CD8-positive, alpha-beta T cell (primary cell): ENCODE measurements at regions of chr3 and their contacts with region 1.

Region 1: DNA sequence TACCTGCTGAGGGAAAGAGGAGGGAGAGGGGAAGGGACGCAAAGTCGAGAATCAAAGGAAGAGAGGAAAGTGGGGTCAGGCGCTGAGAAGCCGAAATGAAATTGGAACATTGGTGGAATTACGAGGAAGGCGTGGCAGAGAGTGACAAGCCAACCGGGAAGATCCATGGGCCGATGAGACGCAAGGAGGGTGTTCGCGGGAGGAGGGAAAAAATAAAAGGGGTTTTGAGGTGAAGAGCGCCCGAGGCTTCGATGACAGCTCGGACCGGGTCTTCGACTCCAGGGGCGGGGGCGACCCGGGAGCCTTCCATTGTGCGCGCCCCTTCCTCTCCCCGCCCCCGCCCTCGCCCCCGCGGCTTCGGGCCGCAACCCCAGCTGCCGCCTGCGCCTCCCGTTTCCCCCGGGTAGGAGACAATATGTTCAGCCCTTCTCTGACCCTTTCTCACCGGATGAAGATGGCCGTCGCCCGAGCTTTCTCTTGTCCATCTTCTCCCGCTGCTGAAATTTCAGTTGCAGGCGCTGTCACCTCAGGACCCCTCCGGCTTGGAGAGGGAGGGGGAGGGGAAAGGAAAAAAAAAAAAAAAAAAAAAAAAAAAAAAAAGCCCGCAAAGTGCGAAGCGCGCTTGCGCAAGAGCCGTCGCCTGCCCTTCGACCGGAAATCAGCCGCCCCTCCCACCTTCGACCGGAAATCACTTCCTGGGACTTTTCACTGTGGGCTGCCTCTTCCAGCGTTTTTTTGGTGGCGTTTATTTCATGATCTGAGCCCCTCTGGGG is at the start of gene SENP7:
- DNase-seq: peak; percentile 38 to 91 (median 82)
- ATAC-seq: peak; percentile 63
- H3K4me3 ChIP-seq: peak within 1 kb of the TSS; percentile 67 to 80
- H3K4me3 Mint-ChIP-seq: peak within 1 kb of the TSS; percentile 100
- H3K27ac ChIP-seq: peak within 1 kb of the TSS; percentile 75 to 90
- H3K27ac Mint-ChIP-seq: peak within 1 kb of the TSS; percentile 99
- H3K4me1 ChIP-seq: peaks cover 29% of the 10 kb centered on the region
- H3K4me1 Mint-ChIP-seq: peaks cover 59% of the 10 kb centered on the region
- H3K27me3 ChIP-seq: no peaks in the 10 kb centered on the region
- H3K27me3 Mint-ChIP-seq: no peaks in the 10 kb centered on the region
- CTCF ChIP-seq: no peak
- total RNA-seq, gene SENP7: 28.3 to 29.1 TPM

Region 2: GRCh38 chr3:101381809-101382208 is 131.0 kb before region 1 on chr3:
- CTCF ChIA-PET with region 1: interaction called, 3 read pairs
- POLR2A ChIA-PET with region 1: no interaction called
- intact Hi-C with region 1: loop called in 1 of 2 experiments (anchors 5 kb)
- DNase-seq: peak in 2 of 9 experiments; percentile 46 to 61
- ATAC-seq: peak; percentile 44
- H3K4me3 ChIP-seq: no peak overlapping the region
- H3K4me3 Mint-ChIP-seq: no peak overlapping the region
- H3K27ac ChIP-seq: peak overlapping the region in 1 of 2 experiments; percentile 25
- H3K27ac Mint-ChIP-seq: peak overlapping the region; percentile 49
- H3K4me1 ChIP-seq: peaks cover 12% of the 10 kb centered on the region
- H3K4me1 Mint-ChIP-seq: peaks cover 57% of the 10 kb centered on the region
- H3K27me3 ChIP-seq: no peaks in the 10 kb centered on the region
- H3K27me3 Mint-ChIP-seq: no peaks in the 10 kb centered on the region
- CTCF ChIP-seq: peak; percentile 55

Region 3: DNA sequence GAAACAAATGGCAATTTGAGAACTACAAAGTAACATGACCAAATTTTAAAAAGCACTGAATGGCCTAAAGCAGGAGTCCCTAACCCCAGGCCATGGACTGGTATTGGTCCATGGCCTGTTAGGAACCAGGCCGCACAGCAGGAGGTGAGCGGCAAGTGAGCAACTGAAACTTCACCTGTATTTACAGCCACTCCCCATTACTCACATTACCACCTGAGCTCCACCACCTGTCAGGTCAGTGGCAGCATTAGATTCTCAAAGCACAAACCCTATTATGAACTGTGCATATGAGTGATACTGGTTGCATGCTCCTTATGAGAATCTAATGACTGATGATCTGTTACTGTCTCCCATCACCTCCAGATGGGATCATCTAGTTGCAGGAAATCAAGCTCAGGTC is 48.6 kb before region 1 on chr3:
- CTCF ChIA-PET with region 1: no interaction called
- POLR2A ChIA-PET with region 1: interaction called, 3 read pairs
- intact Hi-C with region 1: loop called in 1 of 2 experiments (anchors 5 kb)
- DNase-seq: no peak
- ATAC-seq: no peak
- H3K4me3 ChIP-seq: no peak overlapping the region
- H3K4me3 Mint-ChIP-seq: no peak overlapping the region
- H3K27ac ChIP-seq: peak overlapping the region in 1 of 2 experiments; percentile 31
- H3K27ac Mint-ChIP-seq: peak overlapping the region; percentile 75
- H3K4me1 ChIP-seq: peaks cover 27% of the 10 kb centered on the region
- H3K4me1 Mint-ChIP-seq: peaks cover 77% of the 10 kb centered on the region
- H3K27me3 ChIP-seq: no peaks in the 10 kb centered on the region
- H3K27me3 Mint-ChIP-seq: no peaks in the 10 kb centered on the region
- CTCF ChIP-seq: no peak

Region 4: DNA sequence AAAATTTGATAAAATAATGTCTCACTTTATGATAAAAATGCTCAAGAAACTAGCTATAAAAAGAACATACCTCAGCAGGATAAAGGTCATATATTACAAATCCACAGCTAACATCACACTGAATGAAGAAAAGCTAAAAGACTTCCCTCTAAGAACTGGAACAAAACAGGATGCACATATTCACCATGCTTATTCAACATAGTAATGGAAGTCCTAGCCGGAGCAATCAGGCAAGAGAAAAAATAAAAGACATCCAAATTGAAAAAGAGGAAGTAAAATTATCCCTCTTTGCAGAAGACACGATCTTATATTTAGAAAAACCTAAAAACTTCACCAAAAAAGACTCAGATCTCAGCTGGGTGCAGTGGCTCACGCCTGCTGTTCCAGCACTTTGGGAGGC is 33.9 kb before region 1 on chr3:
- CTCF ChIA-PET with region 1: no interaction called
- POLR2A ChIA-PET with region 1: no interaction called
- intact Hi-C with region 1: loop called in 1 of 2 experiments (anchors 5 kb)
- DNase-seq: no peak
- ATAC-seq: no peak
- H3K4me3 ChIP-seq: no peak overlapping the region
- H3K4me3 Mint-ChIP-seq: no peak overlapping the region
- H3K27ac ChIP-seq: no peak overlapping the region
- H3K27ac Mint-ChIP-seq: peak overlapping the region; percentile 47
- H3K4me1 ChIP-seq: peaks cover 9% of the 10 kb centered on the region
- H3K4me1 Mint-ChIP-seq: peaks cover 58% of the 10 kb centered on the region
- H3K27me3 ChIP-seq: no peaks in the 10 kb centered on the region
- H3K27me3 Mint-ChIP-seq: no peaks in the 10 kb centered on the region
- CTCF ChIP-seq: no peak

Region 5: DNA sequence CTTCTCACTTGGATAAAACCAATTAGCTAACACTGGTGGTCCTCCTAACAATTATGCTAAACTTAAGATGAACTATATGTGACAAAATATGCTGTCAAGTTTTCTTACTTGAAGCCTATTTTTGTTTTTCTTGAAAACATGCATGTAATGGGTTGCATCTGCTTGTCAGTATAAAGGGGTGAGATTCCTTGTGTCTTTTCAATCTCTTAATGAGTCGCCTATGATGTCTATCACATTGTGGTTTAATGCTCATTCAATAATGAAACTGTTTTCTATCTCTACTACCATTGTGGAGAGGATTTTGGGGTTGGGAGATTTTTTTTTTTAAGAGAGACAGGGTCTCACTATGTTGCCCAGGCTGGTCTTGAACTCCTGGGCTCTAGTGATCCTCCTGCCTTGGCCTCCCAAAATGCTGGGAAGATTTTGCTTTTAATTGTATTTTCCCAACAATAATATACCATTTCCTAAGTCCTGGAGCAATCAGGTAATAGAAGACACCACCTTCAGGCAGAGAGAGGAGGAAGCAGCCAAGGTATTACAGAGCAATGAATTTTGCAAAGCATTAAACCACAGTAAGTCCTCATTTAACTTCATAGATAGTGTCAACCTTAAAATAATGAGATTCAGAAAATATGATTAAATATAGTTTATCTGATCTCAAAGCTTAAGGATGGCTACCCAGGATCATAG is 31.5 kb after region 1 on chr3:
- CTCF ChIA-PET with region 1: interaction called, 5 read pairs
- POLR2A ChIA-PET with region 1: interaction called, 11 read pairs
- intact Hi-C with region 1: no loop called
- DNase-seq: no peak
- ATAC-seq: peak; percentile 65
- H3K4me3 ChIP-seq: no peak overlapping the region
- H3K4me3 Mint-ChIP-seq: peak overlapping the region; percentile 0
- H3K27ac ChIP-seq: peak overlapping the region in 1 of 2 experiments; percentile 25
- H3K27ac Mint-ChIP-seq: peak overlapping the region; percentile 81
- H3K4me1 ChIP-seq: peaks cover 31% of the 10 kb centered on the region
- H3K4me1 Mint-ChIP-seq: peaks cover 33% of the 10 kb centered on the region
- H3K27me3 ChIP-seq: no peaks in the 10 kb centered on the region
- H3K27me3 Mint-ChIP-seq: no peaks in the 10 kb centered on the region
- CTCF ChIP-seq: no peak

Region 6: GRCh38 chr3:101561630-101562328 is 48.9 kb after region 1 on chr3 and contains the start of gene TRMT10C:
- CTCF ChIA-PET with region 1: interaction called, 3 read pairs
- POLR2A ChIA-PET with region 1: interaction called, 13 read pairs
- intact Hi-C with region 1: loop called (anchors 1 to 2 kb)
- DNase-seq: peak; percentile 86 to 96 (median 92)
- ATAC-seq: peak; percentile 95
- H3K4me3 ChIP-seq: peak within 1 kb of the TSS; percentile 83 to 96
- H3K4me3 Mint-ChIP-seq: peak within 1 kb of the TSS; percentile 99
- H3K27ac ChIP-seq: peak within 1 kb of the TSS; percentile 86 to 93
- H3K27ac Mint-ChIP-seq: peak within 1 kb of the TSS; percentile 99
- H3K4me1 ChIP-seq: peaks cover 12% of the 10 kb centered on the region
- H3K4me1 Mint-ChIP-seq: peaks cover 27% of the 10 kb centered on the region
- H3K27me3 ChIP-seq: no peaks in the 10 kb centered on the region
- H3K27me3 Mint-ChIP-seq: peaks cover 1% of the 10 kb centered on the region
- CTCF ChIP-seq: no peak
- total RNA-seq, gene TRMT10C: 41.5 to 44.0 TPM

Region 7: GRCh38 chr3:101676765-101677435 is 164.1 kb after region 1 on chr3 and contains the start of gene ZBTB11:
- CTCF ChIA-PET with region 1: no interaction called
- POLR2A ChIA-PET with region 1: no interaction called
- intact Hi-C with region 1: loop called in 1 of 2 experiments (anchors 2 kb)
- DNase-seq: peak; percentile 99 to 100 (median 100)
- ATAC-seq: peak; percentile 63
- H3K4me3 ChIP-seq: peak within 1 kb of the TSS; percentile 90 to 100
- H3K4me3 Mint-ChIP-seq: peak within 1 kb of the TSS; percentile 95
- H3K27ac ChIP-seq: peak within 1 kb of the TSS; percentile 97 to 99
- H3K27ac Mint-ChIP-seq: peak within 1 kb of the TSS; percentile 98
- H3K4me1 ChIP-seq: peaks cover 26% of the 10 kb centered on the region
- H3K4me1 Mint-ChIP-seq: peaks cover 49% of the 10 kb centered on the region
- H3K27me3 ChIP-seq: no peaks in the 10 kb centered on the region
- H3K27me3 Mint-ChIP-seq: no peaks in the 10 kb centered on the region
- CTCF ChIP-seq: no peak
- total RNA-seq, gene ZBTB11: 69.6 to 75.2 TPM

Region 8: DNA sequence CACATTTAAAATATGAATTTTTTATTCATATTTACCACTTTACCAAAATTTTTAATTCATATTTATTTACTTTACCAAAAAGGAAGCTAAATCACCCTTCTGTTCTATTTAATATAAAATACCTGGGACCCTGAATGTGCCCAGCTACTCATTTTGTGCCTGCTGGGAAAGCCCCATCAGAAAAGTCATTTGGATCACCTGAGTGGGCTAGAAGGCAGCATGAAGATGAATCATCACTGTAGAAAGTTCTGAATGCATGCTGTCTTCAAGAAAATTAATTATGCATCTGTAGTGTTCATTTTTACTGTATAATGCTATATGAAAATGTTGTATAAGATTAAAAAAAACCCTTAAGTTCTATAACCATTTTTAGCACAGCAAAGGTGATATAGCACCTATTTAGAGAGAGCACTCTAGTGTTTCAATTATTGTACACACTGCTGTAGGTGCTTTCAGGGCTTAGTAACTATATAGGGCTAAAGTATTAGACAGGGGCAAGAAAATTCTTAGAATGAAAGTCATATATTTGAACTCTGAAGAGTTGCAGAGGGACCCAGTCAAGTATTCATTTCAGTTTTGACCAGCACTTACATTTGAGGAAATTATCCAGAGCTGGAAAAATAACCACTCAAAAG is 511.6 kb after region 1 on chr3:
- CTCF ChIA-PET with region 1: no interaction called
- POLR2A ChIA-PET with region 1: no interaction called
- intact Hi-C with region 1: no loop called
- DNase-seq: no peak
- ATAC-seq: no peak
- H3K4me3 ChIP-seq: no peak overlapping the region
- H3K4me3 Mint-ChIP-seq: no peak overlapping the region
- H3K27ac ChIP-seq: no peak overlapping the region
- H3K27ac Mint-ChIP-seq: no peak overlapping the region
- H3K4me1 ChIP-seq: no peaks in the 10 kb centered on the region
- H3K4me1 Mint-ChIP-seq: peaks cover 14% of the 10 kb centered on the region
- H3K27me3 ChIP-seq: no peaks in the 10 kb centered on the region
- H3K27me3 Mint-ChIP-seq: no peaks in the 10 kb centered on the region
- CTCF ChIP-seq: no peak